Right ventricle myocardium inferior (tissue), 1 donor: ENCODE measurements at regions of chr11 and their contacts with region 1.

Region 1: DNA sequence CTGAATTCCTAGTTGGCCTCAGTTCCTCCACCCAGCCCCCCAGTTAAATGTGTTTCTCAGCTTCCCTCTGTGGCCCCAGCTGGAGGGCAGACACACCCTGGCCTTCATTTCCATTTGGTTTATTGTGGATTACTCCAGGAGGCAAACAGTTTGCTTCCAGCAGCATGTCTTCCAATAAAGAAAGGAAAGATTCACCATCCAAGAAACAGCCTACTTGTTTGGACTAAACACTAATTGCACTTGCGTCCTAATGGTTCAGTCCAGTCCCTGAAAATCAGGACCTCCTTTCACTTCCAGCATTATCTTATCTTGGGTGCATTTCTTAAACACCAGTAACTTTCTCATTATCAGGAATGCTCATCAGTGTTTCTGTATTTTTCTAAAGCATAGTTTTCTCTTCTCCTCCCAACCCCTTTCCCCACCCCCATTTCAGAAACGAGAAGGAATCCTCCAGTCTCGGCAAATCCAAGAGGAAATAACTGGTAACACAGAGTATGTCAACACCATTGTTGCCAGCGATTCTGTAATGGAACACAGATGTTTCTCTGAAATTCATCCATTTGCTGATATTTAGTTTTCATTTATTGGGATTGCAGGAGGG is 130.9 kb downstream of the PARVA start:
- DNase-seq: no peak
- ATAC-seq: peak; percentile 81

Region 2: GRCh38 chr11:12331239-12331874 is 176.9 kb before region 1 on chr11:
- intact Hi-C with region 1: loop called (anchors 10 kb)
- DNase-seq: peak; percentile 82
- ATAC-seq: peak; percentile 84

Region 3: GRCh38 chr11:12411806-12412727 is 96.2 kb before region 1 on chr11:
- intact Hi-C with region 1: loop called (anchors 5 kb)
- DNase-seq: no peak
- ATAC-seq: peak; percentile 86

Region 4: GRCh38 chr11:12540913-12541582 is 32.8 kb after region 1 on chr11:
- intact Hi-C with region 1: no loop called
- DNase-seq: no peak
- ATAC-seq: peak; percentile 17